ENCODE measurements at regions of chr12 and their contacts with region 1.

Region 1: GRCh38 chr12:95298916-95299315 is 81.3 kb downstream of the VEZT start:
- H3K4me3 Mint-ChIP-seq: no peak overlapping the region
- H3K27ac Mint-ChIP-seq: no peak overlapping the region
- H3K4me1 Mint-ChIP-seq: no peaks in the 10 kb centered on the region
- H3K27me3 Mint-ChIP-seq: no peaks in the 10 kb centered on the region

Region 2: GRCh38 chr12:95316798-95317197 is 17.9 kb after region 1 on chr12:
- intact Hi-C with region 1: no loop called
- H3K4me3 Mint-ChIP-seq: no peak overlapping the region
- H3K27ac Mint-ChIP-seq: no peak overlapping the region
- H3K4me1 Mint-ChIP-seq: no peaks in the 10 kb centered on the region
- H3K27me3 Mint-ChIP-seq: peaks cover 4% of the 10 kb centered on the region

Region 3: GRCh38 chr12:95497031-95497430 is 198.1 kb after region 1 on chr12:
- intact Hi-C with region 1: loop called (anchors 10 kb)
- H3K4me3 Mint-ChIP-seq: no peak overlapping the region
- H3K27ac Mint-ChIP-seq: no peak overlapping the region
- H3K4me1 Mint-ChIP-seq: no peaks in the 10 kb centered on the region
- H3K27me3 Mint-ChIP-seq: no peaks in the 10 kb centered on the region

Region 4: GRCh38 chr12:95557625-95558024 is 258.7 kb after region 1 on chr12:
- intact Hi-C with region 1: no loop called
- H3K4me3 Mint-ChIP-seq: no peak overlapping the region
- H3K27ac Mint-ChIP-seq: no peak overlapping the region
- H3K4me1 Mint-ChIP-seq: peaks cover 5% of the 10 kb centered on the region
- H3K27me3 Mint-ChIP-seq: peaks cover 3% of the 10 kb centered on the region

Measured in dendritic cell treated with granulocyte-macrophage colony-stimulating factor and Interleukin-4, amounts not matched to agents 40 ng/mL and 50 ng/mL, for 4 days (primary cell).